IMR-90 (cell line): ENCODE measurements at regions of chr3 and their contacts with region 1.

Region 1: GRCh38 chr3:146845361-146845760 is 240.2 kb upstream of the PLSCR5 start:
- DNase-seq: no peak
- ATAC-seq: no peak
- H3K4me3 ChIP-seq: no peak overlapping the region
- H3K27ac ChIP-seq: no peak overlapping the region
- H3K4me1 ChIP-seq: no peaks in the 10 kb centered on the region
- H3K27me3 ChIP-seq: no peaks in the 10 kb centered on the region
- CTCF ChIP-seq: no peak
- POLR2A ChIP-seq: no peak
- RAD21 ChIP-seq: no peak

Region 2: DNA sequence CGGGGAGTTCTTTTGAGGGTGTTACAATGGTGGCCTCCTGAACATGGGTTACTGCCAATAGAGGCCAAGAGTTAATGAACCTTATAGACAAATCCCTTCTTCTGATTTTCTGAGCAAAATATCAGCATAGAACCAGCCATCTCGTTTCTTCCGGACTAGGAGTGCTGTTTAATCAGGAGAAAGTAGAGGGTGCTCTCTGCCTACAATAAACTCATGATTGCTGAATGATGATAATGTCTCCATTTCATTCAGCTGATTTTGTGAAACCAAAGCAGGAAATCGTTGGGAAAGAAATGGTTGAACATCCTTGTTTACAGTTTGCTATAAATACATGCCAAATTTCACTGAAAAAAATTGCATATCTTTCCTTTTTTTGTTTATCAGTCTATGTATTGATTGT is 97.4 kb before region 1 on chr3:
- CTCF ChIA-PET with region 1: no interaction called
- POLR2A ChIA-PET with region 1: no interaction called
- dilution Hi-C with region 1: no loop called
- in situ Hi-C with region 1: no loop called
- intact Hi-C with region 1: loop called (anchors 5 kb)
- DNase-seq: peak; percentile 33
- ATAC-seq: no peak
- H3K4me3 ChIP-seq: no peak overlapping the region
- H3K27ac ChIP-seq: no peak overlapping the region
- H3K4me1 ChIP-seq: no peaks in the 10 kb centered on the region
- H3K27me3 ChIP-seq: no peaks in the 10 kb centered on the region
- CTCF ChIP-seq: peak; percentile 39
- POLR2A ChIP-seq: no peak
- RAD21 ChIP-seq: peak; percentile 48

Region 3: DNA sequence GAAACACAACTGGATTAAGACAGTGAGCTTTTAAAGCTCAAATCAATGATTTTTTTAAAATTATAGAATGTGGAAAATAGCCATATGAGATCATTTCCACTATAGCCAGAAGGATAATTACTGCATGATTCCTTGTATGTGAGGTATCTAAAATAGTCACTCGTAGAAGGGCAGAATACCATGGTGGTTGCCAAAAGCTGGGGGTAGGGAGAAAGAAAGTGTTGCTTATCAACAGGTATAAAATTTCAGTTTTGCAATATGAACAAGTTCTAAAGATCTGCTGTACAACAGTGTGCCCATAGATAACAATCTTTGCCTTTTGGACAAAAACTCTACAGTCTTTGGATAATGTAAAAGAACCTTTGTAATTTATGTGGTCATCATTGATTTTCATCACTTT is 86.1 kb before region 1 on chr3:
- CTCF ChIA-PET with region 1: no interaction called
- POLR2A ChIA-PET with region 1: no interaction called
- dilution Hi-C with region 1: no loop called
- in situ Hi-C with region 1: no loop called
- intact Hi-C with region 1: no loop called
- DNase-seq: no peak
- ATAC-seq: no peak
- H3K4me3 ChIP-seq: no peak overlapping the region
- H3K27ac ChIP-seq: no peak overlapping the region
- H3K4me1 ChIP-seq: no peaks in the 10 kb centered on the region
- H3K27me3 ChIP-seq: no peaks in the 10 kb centered on the region
- CTCF ChIP-seq: no peak
- POLR2A ChIP-seq: no peak
- RAD21 ChIP-seq: no peak